Spleen (tissue), 13 donors: ENCODE measurements at regions of chr1 and their contacts with region 1.

Region 1: GRCh38 chr1:26787706-26788514 is at the start of gene PIGV:
- DNase-seq: peak; percentile 97
- H3K4me3 ChIP-seq: peak within 1 kb of the TSS; percentile 63 to 96 (median 75)
- H3K27ac ChIP-seq: peak within 1 kb of the TSS; percentile 96 to 100 (median 99)
- H3K4me1 ChIP-seq: peaks cover 44 to 84% (median 67%) of the 10 kb centered on the region in 6 donors
- H3K27me3 ChIP-seq: no peaks in the 10 kb centered on the region
- CTCF ChIP-seq: peak in 10 of 11 experiments; percentile 20 to 71 (median 46)
- POLR2A ChIP-seq: peak in 2 of 3 donors; percentile 6 to 46
- total RNA-seq, gene PIGV: 8.1 to 21.8 (median 12.5) TPM

Region 2: GRCh38 chr1:26602378-26602959 is 185.4 kb before region 1 on chr1:
- intact Hi-C with region 1: loop called (anchors 5 kb)
- DNase-seq: no peak
- H3K4me3 ChIP-seq: no peak overlapping the region
- H3K27ac ChIP-seq: no peak overlapping the region
- H3K4me1 ChIP-seq: peaks cover 0 to 20% (median 10%) of the 10 kb centered on the region in 6 donors
- H3K27me3 ChIP-seq: no peaks in the 10 kb centered on the region
- CTCF ChIP-seq: peak; percentile 86 to 97 (median 92)
- POLR2A ChIP-seq: no peak

Region 3: DNA sequence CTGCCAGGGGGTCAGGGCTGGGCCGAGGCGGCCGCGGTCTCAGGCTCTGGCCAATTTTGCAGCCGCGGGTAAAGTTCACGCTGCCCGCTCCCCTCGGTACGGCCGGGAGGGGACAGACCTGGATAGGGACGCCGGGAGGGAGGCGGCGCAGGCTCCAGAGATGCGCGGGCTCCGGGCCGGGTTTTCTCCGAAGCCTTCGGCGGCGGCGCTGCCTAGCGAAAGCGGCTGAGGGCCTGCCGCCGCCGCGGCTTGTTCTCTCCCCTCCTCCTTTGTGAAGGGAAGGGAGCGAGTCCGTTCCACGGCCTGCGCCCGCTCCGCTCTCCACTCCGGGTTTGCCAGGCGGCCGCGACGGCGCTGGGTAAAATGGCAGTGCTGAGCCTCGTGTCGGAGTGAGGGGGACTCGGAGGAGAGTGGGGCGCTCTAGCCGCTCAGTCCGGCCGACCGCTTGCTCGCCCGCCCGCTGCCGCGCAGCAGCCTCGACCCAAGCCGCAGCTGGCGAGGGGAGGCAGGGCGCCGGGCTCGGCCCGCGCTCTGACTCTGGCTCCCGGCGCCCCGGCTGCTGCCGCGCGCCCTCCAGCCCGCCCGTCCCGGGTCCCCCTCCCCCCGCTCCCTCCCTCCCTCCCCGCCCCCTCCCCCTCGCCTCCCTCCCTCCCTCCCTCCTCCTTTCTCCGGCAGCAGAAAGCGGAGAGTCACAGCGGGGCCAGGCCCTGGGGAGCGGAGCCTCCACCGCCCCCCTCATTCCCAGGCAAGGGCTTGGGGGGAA is 92.4 kb before region 1 on chr1 and contains the start of gene ARID1A:
- intact Hi-C with region 1: loop called (anchors 5 kb)
- DNase-seq: peak; percentile 99
- H3K4me3 ChIP-seq: peak within 1 kb of the TSS; percentile 80 to 95 (median 88)
- H3K27ac ChIP-seq: peak within 1 kb of the TSS; percentile 92 to 99 (median 98)
- H3K4me1 ChIP-seq: peaks cover 39 to 76% (median 72%) of the 10 kb centered on the region in 6 donors
- H3K27me3 ChIP-seq: peaks cover 0 to 3% (median 0%) of the 10 kb centered on the region in 7 donors
- CTCF ChIP-seq: peak in 6 of 11 experiments; percentile 4 to 36 (median 16)
- POLR2A ChIP-seq: peak in 2 of 3 donors; percentile 60 to 91
- total RNA-seq, gene ARID1A: 86.0 to 121 (median 97.4) TPM